ENCODE measurements at regions of chr2 and their contacts with region 1.

Region 1: DNA sequence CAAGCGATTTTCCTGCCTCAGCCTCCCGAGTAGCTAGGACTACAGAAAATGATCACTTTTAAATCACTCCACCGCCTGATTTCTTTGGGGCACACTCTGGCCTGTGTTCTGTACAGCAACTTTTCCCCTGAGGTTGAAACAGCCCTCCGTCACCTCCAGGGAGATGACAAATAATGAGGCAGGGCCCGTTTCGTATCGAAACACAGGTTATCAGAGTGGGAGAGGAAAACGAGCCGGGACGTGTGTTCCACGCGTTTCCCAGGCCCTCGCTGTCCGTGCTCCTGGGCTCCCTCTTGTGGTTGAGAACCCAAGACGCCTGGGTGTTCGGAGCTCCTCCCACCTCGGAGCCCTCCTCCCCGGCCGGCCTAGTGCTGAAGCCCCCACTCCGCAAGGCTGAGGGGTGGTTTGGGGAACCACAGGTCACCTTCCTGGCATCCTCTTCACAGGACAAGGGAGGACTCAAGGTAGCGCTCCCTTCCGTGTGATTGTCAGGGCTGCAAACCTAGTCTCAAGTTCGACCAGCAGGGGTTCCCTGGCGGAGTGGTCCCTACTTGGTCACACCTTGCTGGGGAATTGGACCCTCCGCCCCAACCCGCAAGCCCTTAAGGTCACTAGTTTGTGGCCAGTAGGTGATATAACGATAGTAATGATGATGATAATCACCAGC is 12.8 kb downstream of the ATP6V1B1 start:
- DNase-seq: peak; percentile 81
- H3K4me3 Mint-ChIP-seq: peak overlapping the region; percentile 65
- H3K27ac Mint-ChIP-seq: no peak overlapping the region
- H3K4me1 Mint-ChIP-seq: peaks cover 10% of the 10 kb centered on the region
- H3K27me3 Mint-ChIP-seq: peaks cover 9% of the 10 kb centered on the region

Region 2: GRCh38 chr2:70301344-70302194 is 646.9 kb before region 1 on chr2 and contains the start of gene FAM136A:
- CTCF ChIA-PET with region 1: interaction called, 16 read pairs
- POLR2A ChIA-PET with region 1: no interaction called
- intact Hi-C with region 1: no loop called
- DNase-seq: peak; percentile 93
- H3K4me3 Mint-ChIP-seq: peak within 1 kb of the TSS; percentile 86
- H3K27ac Mint-ChIP-seq: peak within 1 kb of the TSS; percentile 92
- H3K4me1 Mint-ChIP-seq: peaks cover 27% of the 10 kb centered on the region
- H3K27me3 Mint-ChIP-seq: no peaks in the 10 kb centered on the region
- total RNA-seq, gene FAM136A: 48.0 to 49.8 TPM

Region 3: GRCh38 chr2:70531419-70532086 is 416.9 kb before region 1 on chr2:
- CTCF ChIA-PET with region 1: no interaction called
- POLR2A ChIA-PET with region 1: no interaction called
- intact Hi-C with region 1: no loop called
- DNase-seq: no peak
- H3K4me3 Mint-ChIP-seq: no peak overlapping the region
- H3K27ac Mint-ChIP-seq: no peak overlapping the region
- H3K4me1 Mint-ChIP-seq: no peaks in the 10 kb centered on the region
- H3K27me3 Mint-ChIP-seq: peaks cover 2% of the 10 kb centered on the region

Region 4: DNA sequence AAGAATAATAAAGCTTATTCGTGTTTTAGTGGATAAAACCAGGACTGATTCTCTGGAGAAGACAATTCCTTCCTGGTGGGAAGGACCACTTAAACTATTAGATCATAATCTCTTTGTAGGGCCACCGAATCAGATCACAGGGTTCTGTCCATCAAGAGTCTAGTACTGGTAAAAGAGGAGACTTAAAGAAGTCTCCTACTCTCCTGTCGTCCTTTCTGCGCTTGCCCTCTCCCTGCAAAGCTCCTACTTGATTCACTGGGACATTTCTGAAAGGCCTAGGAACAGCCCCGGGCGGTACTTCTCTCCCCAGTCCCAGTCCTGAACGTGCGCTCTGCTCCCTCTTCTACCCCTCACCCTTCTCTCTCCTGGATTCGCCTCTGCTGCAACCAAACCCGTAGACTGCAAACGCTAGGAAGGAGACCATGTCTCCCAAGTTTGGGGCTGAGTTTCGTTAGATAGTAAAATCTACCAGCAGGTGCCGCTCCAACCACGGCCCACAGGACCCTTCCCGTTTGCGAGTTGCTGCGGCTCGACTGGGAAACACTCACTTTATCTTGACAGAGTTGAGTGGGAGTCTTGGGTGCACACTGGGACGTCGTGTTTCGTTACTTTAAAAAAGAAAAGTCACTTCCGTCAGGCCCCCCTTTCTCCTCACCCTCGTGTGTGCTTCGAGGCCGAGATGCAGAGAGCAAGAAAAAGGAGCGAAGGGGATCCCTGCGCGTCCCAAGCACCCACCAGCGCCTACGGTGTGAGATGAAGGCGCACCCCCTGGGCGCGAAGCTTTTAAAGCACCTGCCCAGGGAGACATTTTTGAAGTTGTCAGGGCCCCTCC is 158.9 kb before region 1 on chr2:
- CTCF ChIA-PET with region 1: interaction called, 54 read pairs
- POLR2A ChIA-PET with region 1: no interaction called
- intact Hi-C with region 1: loop called (anchors 1 kb)
- DNase-seq: peak; percentile 82
- H3K4me3 Mint-ChIP-seq: peak overlapping the region; percentile 49
- H3K27ac Mint-ChIP-seq: no peak overlapping the region
- H3K4me1 Mint-ChIP-seq: peaks cover 11% of the 10 kb centered on the region
- H3K27me3 Mint-ChIP-seq: peaks cover 52% of the 10 kb centered on the region

Region 5: DNA sequence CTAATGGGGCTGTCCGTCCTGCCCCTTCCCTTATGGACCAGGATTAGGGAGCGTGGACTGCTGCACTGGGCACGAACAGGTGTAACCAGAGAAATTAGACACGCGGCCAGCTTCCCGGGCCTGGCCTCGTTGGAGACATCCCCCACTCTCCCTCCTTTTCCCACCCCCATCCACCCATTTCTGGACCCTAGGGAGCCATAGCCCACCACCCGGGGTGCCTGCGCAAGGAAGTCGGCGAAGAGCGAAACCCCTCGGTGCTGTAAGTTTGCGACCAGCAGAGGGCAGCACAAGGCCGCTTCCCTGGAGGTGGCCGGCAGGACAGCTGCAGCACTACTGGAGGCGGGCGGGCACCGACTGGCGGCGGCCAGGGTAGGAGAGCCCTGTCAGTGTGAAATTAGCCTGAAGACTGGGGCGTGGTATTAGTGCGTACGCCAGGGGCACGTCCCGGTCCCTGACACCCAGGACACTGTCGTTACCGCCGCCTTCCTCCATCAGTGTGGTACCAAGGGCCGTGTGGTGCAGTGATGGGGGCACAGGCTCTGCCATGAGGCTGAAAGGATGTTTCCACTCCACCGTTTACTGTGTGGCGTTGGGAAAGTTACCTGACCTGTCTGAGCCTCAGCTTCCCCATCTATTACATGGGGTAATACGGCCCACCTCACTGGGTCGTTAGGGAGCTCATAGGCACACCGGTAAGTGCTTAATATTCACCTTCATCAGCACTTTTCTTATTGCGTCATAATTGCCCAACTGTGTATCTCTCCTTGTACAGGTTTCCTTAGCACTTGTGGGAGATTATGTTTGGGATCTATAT is 76.9 kb before region 1 on chr2:
- CTCF ChIA-PET with region 1: interaction called, 88 read pairs
- POLR2A ChIA-PET with region 1: no interaction called
- intact Hi-C with region 1: loop called (anchors 1 kb)
- DNase-seq: peak; percentile 87
- H3K4me3 Mint-ChIP-seq: no peak overlapping the region
- H3K27ac Mint-ChIP-seq: no peak overlapping the region
- H3K4me1 Mint-ChIP-seq: no peaks in the 10 kb centered on the region
- H3K27me3 Mint-ChIP-seq: peaks cover 40% of the 10 kb centered on the region

Region 6: GRCh38 chr2:70935468-70936164 is 12.9 kb before region 1 on chr2 and contains the start of gene ATP6V1B1:
- CTCF ChIA-PET with region 1: interaction called, 16 read pairs
- POLR2A ChIA-PET with region 1: no interaction called
- intact Hi-C with region 1: no loop called
- DNase-seq: no peak
- H3K4me3 Mint-ChIP-seq: no peak within 1 kb of the TSS
- H3K27ac Mint-ChIP-seq: no peak within 1 kb of the TSS
- H3K4me1 Mint-ChIP-seq: no peaks in the 10 kb centered on the region
- H3K27me3 Mint-ChIP-seq: peaks cover 8% of the 10 kb centered on the region
- total RNA-seq, gene ATP6V1B1: not detected

Region 7: DNA sequence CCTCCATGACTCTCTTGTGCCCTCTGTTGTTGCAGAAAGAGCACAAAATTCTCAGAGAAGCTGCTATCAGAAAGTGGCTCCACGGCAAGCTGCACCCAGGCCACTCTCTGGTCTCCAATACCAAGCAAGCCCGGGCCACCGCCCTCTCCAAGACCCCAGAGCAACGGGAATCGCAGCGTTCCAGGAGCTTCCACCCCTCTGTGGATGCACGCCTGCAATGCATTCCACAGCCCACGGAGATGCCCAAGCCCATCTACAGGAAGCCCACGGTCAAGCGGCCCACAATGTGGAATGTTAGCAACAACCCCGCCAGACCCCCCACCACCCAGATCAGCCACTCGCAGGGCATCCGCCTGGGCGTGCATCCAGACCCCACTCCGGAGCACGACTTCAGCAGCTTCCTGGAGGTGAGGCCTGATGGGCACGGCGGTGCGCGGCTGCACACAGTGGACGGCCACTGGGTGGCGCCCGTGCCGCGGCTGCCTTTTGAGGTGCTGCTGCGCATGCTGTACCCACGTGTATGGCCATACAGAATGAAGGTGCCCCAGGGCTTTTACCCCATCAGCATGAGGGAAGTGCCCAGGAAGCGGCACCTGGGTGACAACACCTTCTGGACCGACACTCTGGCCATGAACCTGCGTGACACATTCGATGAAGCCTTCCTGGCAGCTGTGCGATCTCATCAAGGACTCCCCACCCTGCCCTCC is 36.3 kb after region 1 on chr2:
- CTCF ChIA-PET with region 1: interaction called, 10 read pairs
- POLR2A ChIA-PET with region 1: no interaction called
- intact Hi-C with region 1: no loop called
- DNase-seq: peak; percentile 87
- H3K4me3 Mint-ChIP-seq: no peak overlapping the region
- H3K27ac Mint-ChIP-seq: no peak overlapping the region
- H3K4me1 Mint-ChIP-seq: peaks cover 12% of the 10 kb centered on the region
- H3K27me3 Mint-ChIP-seq: no peaks in the 10 kb centered on the region

Measured in activated CD4-positive, alpha-beta memory T cell treated with anti-CD3 and anti-CD28 coated beads for 36 hours (primary cell).